PC-3 (cell line): ENCODE measurements at regions of chr10 and their contacts with region 1.

Region 1: GRCh38 chr10:59709395-59710125 is at the start of gene SLC16A9:
- DNase-seq: peak; percentile 83
- ATAC-seq: peak; percentile 82
- H3K4me3 ChIP-seq: peak within 1 kb of the TSS; percentile 85
- H3K27ac ChIP-seq: peak within 1 kb of the TSS; percentile 43
- H3K4me1 ChIP-seq: peaks cover 27% of the 10 kb centered on the region
- H3K27me3 ChIP-seq: no peaks in the 10 kb centered on the region
- CTCF ChIP-seq: peak; percentile 60
- total RNA-seq, gene SLC16A9: 12.8 and 17.4 TPM in 2 replicates

Region 2: DNA sequence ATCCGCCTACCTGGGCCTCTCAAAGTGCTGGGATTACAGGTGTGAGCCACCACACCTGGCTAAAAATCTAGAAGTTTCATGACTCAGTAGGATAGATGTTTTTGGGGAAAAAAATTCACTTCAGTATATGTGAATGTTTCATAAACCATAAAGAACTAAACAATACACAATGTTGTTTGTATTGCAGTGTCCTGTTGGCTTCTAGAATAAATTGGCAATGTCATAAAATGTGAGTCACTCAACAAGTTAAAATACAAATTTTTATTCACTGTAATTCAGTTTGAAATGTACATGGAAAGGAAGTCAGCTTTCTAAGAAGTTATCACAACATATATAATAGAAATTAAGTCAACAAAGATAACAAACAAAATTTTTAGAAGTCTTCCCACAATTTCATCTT is 27.2 kb after region 1 on chr10:
- CTCF ChIA-PET with region 1: no interaction called
- POLR2A ChIA-PET with region 1: interaction called, 3 read pairs
- intact Hi-C with region 1: loop called (anchors 2 kb)
- DNase-seq: peak; percentile 61
- ATAC-seq: peak; percentile 69
- H3K4me3 ChIP-seq: no peak overlapping the region
- H3K27ac ChIP-seq: peak overlapping the region; percentile 24
- H3K4me1 ChIP-seq: peaks cover 33% of the 10 kb centered on the region
- H3K27me3 ChIP-seq: no peaks in the 10 kb centered on the region
- CTCF ChIP-seq: no peak

Region 3: GRCh38 chr10:59748834-59749233 is 39.3 kb after region 1 on chr10:
- CTCF ChIA-PET with region 1: no interaction called
- POLR2A ChIA-PET with region 1: interaction called, 5 read pairs
- intact Hi-C with region 1: loop called (anchors 2 kb)
- DNase-seq: peak; percentile 82
- ATAC-seq: peak; percentile 93
- H3K4me3 ChIP-seq: no peak overlapping the region
- H3K27ac ChIP-seq: peak overlapping the region; percentile 76
- H3K4me1 ChIP-seq: peaks cover 14% of the 10 kb centered on the region
- H3K27me3 ChIP-seq: no peaks in the 10 kb centered on the region
- CTCF ChIP-seq: no peak

Region 4: GRCh38 chr10:59793919-59794318 is 84.4 kb after region 1 on chr10:
- CTCF ChIA-PET with region 1: no interaction called
- POLR2A ChIA-PET with region 1: no interaction called
- intact Hi-C with region 1: loop called (anchors 2 kb)
- DNase-seq: peak; percentile 92
- ATAC-seq: peak; percentile 97
- H3K4me3 ChIP-seq: peak overlapping the region; percentile 25; the same call in 1 of the 2 replicates
- H3K27ac ChIP-seq: peak overlapping the region; percentile 83
- H3K4me1 ChIP-seq: peaks cover 27% of the 10 kb centered on the region
- H3K27me3 ChIP-seq: no peaks in the 10 kb centered on the region
- CTCF ChIP-seq: no peak

Region 5: DNA sequence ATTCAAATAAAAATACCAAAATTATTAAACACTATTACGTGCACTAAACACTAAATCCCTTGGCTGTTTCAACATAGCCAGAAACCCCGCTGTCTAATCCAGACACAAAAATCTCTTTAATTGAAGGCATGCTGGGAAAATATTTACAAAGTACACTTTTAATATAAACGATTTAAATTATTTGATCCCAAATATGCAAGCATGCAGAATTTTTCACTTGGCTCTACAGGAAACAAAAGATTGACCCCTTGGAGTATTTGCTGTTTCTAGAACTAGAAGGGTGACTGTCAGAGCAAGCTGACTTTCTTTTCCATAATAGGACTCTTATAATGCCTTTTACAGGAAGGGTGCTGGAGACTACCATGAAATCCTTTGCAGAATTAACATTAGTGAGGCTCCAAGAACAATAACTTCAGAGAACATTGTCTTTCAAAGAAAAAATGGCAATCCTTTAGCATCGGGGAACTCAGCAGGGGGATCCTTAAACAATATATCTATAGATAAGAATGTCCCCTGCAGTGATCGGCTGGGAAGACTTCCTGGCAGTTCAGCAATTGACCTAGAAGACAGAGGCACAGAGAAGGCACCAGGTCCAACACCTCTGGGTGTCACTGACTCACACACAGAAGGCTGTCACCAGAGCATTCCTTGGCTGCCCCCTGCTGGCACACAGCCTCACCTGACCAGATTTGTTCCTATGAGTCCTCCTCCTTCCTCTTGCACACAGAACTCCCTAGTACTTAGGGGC is 99.5 kb after region 1 on chr10:
- CTCF ChIA-PET with region 1: no interaction called
- POLR2A ChIA-PET with region 1: no interaction called
- intact Hi-C with region 1: loop called (anchors 1 kb)
- DNase-seq: peak; percentile 93
- ATAC-seq: peak; percentile 96
- H3K4me3 ChIP-seq: no peak overlapping the region
- H3K27ac ChIP-seq: no peak overlapping the region
- H3K4me1 ChIP-seq: no peaks in the 10 kb centered on the region
- H3K27me3 ChIP-seq: no peaks in the 10 kb centered on the region
- CTCF ChIP-seq: peak; percentile 99

Region 6: DNA sequence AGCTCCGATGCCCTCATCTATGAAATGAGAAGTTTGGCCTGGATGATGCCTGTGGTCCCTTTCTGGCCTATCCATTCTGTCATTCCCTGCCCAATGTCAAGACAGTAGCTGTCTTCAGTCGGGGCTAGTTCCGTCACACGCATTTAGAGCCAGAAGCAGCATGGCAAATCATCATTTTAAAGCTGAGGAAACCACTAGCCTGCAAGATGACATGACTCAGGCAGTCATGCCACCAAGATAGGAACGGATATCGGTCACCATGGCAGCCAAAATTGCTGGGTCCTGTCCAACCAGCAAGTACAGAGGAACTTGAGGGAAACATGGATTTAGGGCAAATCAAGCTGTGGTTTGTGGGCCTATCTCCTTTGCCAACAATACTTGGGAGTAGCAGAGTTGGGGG is 108.2 kb after region 1 on chr10:
- CTCF ChIA-PET with region 1: interaction called, 10 read pairs
- POLR2A ChIA-PET with region 1: no interaction called
- intact Hi-C with region 1: no loop called
- DNase-seq: no peak
- ATAC-seq: no peak
- H3K4me3 ChIP-seq: no peak overlapping the region
- H3K27ac ChIP-seq: no peak overlapping the region
- H3K4me1 ChIP-seq: no peaks in the 10 kb centered on the region
- H3K27me3 ChIP-seq: no peaks in the 10 kb centered on the region
- CTCF ChIP-seq: no peak

Region 7: DNA sequence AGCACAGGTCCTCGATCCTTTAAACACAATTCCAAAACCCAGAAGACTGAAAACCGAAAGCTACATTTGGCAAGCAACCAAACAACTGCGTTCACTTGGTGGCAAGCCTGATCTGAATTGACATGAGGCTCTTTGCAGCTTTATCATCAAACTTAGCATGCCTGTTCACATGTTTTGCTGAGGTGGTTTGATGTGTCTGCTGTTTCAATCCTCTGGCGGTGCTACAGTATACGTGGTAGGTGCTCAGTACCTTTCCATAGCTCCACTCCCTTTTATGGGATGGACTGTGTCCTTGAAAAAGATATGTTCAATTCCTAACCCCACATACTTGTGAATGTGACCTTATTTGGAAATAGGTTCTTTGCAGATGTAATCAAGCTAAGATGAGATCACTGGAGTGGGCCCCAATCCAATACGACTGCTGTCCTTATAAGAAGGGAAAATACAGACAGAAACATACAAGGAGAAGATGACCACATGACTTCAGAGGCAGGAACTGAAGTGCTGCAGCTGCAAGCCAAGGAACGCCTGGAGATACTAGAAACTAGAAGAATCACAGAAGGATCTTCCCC is 163.4 kb after region 1 on chr10:
- CTCF ChIA-PET with region 1: no interaction called
- POLR2A ChIA-PET with region 1: no interaction called
- intact Hi-C with region 1: no loop called
- DNase-seq: no peak
- ATAC-seq: no peak
- H3K4me3 ChIP-seq: no peak overlapping the region
- H3K27ac ChIP-seq: no peak overlapping the region
- H3K4me1 ChIP-seq: peaks cover 18% of the 10 kb centered on the region
- H3K27me3 ChIP-seq: no peaks in the 10 kb centered on the region
- CTCF ChIP-seq: no peak